MCF 10A (cell line): ENCODE measurements at regions of chr6 and their contacts with region 1.

Region 1: DNA sequence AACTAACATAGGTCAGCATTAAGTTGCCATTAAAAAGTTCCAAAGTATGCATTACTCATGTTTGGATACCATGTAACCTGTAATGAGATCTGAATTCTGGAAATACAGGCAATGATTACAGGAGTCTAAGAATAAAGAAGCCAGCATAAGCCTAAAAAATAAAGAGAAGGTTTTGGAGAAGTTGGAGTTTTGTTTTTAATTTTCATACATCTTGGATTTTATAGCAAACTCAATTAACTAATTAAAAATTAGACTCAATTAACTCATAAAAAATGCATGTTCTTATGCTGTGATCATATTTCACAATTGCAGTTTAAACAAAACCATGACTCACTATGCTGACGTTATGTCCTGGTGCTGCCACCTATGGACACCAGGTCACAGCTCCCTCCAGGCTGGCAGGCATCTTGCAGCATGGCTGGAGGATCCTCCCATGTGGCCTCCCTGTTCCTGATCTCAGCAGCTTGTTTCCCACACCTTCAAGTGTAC is 648.8 kb upstream of the AGPAT4 start:
- DNase-seq: peak; percentile 88
- H3K4me3 Mint-ChIP-seq: no peak overlapping the region
- H3K27ac Mint-ChIP-seq: peak overlapping the region; percentile 77
- H3K4me1 Mint-ChIP-seq: peaks cover 17% of the 10 kb centered on the region
- H3K27me3 Mint-ChIP-seq: no peaks in the 10 kb centered on the region
- CTCF ChIP-seq: peak; percentile 30

Region 2: DNA sequence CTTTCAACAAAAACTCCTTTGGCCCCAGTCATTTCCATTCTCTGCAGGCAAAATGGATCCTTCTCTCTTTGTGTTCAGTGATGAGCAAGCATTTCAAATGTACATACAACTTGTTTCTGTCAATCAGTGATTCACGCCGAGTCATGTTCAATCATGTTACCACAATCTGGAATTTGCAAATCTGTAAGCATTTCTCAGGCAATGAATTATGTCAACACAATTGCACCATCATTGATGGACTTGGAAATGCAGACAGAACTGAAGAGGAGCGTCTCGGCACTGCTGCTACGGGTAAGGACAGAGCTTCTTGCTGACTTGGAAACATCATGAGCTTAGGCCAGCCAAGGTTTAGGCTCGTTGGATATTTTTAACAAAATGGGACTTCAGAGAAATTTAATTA is 516.0 kb before region 1 on chr6:
- CTCF ChIA-PET with region 1: no interaction called
- POLR2A ChIA-PET with region 1: interaction called, 6 read pairs
- intact Hi-C with region 1: loop called (anchors 10 kb)
- DNase-seq: peak; percentile 97
- H3K4me3 Mint-ChIP-seq: peak overlapping the region; percentile 20
- H3K27ac Mint-ChIP-seq: peak overlapping the region; percentile 73
- H3K4me1 Mint-ChIP-seq: peaks cover 17% of the 10 kb centered on the region
- H3K27me3 Mint-ChIP-seq: no peaks in the 10 kb centered on the region
- CTCF ChIP-seq: no peak

Region 3: DNA sequence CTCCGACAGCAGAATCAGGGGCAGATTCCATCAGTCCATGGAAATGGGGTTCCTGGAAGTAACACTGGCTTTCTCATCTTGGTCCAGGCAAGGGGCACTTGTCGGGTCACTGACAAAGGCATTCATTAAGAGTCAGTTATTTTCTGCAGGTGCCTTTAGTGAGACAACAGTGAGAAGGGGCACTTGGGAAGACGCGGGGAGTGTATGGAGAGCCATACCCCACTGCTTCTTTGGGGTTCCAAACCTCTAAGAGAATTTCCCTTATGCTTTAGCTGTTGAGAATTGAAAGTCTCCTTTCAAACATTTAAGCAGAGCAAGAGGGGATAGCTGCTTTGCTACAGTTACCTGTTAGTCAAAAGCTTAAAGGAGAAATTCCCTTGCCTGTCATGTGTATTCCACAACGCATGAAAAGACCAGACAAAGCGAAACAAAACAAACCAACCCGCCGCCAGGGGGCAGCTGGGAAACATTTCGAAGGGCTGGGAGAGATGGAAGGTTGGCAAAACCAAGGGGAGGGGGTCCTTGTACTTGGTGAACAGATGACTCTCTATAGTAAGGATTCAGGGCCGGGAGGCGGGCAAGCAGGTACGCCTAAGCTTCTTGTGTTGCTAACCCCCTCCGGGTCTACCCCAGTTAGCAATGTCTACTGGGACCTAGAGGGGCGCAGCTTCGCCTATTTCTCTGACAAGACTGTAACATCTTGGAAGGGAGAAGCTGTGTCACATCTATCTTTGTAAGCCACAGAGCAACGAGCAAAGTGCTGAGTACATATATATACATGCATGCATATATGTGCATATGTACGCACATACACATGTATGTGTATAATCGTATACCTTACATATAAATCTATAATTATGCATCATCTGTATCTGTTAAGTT is 173.9 kb before region 1 on chr6:
- CTCF ChIA-PET with region 1: no interaction called
- POLR2A ChIA-PET with region 1: no interaction called
- intact Hi-C with region 1: loop called (anchors 5 kb)
- DNase-seq: peak; percentile 67
- H3K4me3 Mint-ChIP-seq: no peak overlapping the region
- H3K27ac Mint-ChIP-seq: no peak overlapping the region
- H3K4me1 Mint-ChIP-seq: peaks cover 4% of the 10 kb centered on the region
- H3K27me3 Mint-ChIP-seq: no peaks in the 10 kb centered on the region
- CTCF ChIP-seq: peak; percentile 52

Region 4: DNA sequence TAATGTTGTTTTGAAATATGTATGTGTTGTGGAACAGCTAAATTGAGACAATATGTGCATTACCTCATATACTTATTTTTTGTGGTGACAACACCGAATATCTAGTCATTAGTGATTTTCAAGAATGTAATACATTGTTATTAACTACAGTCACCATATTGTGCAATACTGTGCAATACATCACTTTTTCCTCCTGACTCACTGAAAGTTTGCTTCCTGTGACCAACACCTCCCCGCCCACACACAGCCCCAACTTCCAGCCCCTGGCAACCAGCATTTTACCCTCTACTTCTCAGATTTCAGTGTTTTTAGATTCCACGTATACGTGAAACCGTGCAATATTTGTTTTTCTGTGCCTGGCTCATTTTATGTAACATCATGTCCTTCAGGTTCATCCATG is 177.0 kb after region 1 on chr6:
- CTCF ChIA-PET with region 1: no interaction called
- POLR2A ChIA-PET with region 1: no interaction called
- intact Hi-C with region 1: loop called (anchors 2 kb)
- DNase-seq: peak; percentile 90
- H3K4me3 Mint-ChIP-seq: no peak overlapping the region
- H3K27ac Mint-ChIP-seq: peak overlapping the region; percentile 40
- H3K4me1 Mint-ChIP-seq: peaks cover 6% of the 10 kb centered on the region
- H3K27me3 Mint-ChIP-seq: no peaks in the 10 kb centered on the region
- CTCF ChIP-seq: no peak